Panc1 (cell line): ENCODE measurements at regions of chr4 and their contacts with region 1.

Region 1: GRCh38 chr4:170259631-170260153 is 169.9 kb upstream of the AADAT start:
- DNase-seq: peak; percentile 70
- ATAC-seq: peak; percentile 96
- H3K4me3 ChIP-seq: no peak overlapping the region
- H3K27ac ChIP-seq: no peak overlapping the region
- H3K4me1 ChIP-seq: no peaks in the 10 kb centered on the region
- H3K27me3 ChIP-seq: no peaks in the 10 kb centered on the region
- CTCF ChIP-seq: peak; percentile 86

Region 2: GRCh38 chr4:170138580-170139194 is 121.0 kb before region 1 on chr4:
- CTCF ChIA-PET with region 1: no interaction called
- POLR2A ChIA-PET with region 1: no interaction called
- in situ Hi-C with region 1: no loop called
- intact Hi-C with region 1: loop called (anchors 1 kb)
- DNase-seq: peak; percentile 46
- ATAC-seq: peak; percentile 87
- H3K4me3 ChIP-seq: no peak overlapping the region
- H3K27ac ChIP-seq: no peak overlapping the region
- H3K4me1 ChIP-seq: no peaks in the 10 kb centered on the region
- H3K27me3 ChIP-seq: no peaks in the 10 kb centered on the region
- CTCF ChIP-seq: peak; percentile 77

Region 3: DNA sequence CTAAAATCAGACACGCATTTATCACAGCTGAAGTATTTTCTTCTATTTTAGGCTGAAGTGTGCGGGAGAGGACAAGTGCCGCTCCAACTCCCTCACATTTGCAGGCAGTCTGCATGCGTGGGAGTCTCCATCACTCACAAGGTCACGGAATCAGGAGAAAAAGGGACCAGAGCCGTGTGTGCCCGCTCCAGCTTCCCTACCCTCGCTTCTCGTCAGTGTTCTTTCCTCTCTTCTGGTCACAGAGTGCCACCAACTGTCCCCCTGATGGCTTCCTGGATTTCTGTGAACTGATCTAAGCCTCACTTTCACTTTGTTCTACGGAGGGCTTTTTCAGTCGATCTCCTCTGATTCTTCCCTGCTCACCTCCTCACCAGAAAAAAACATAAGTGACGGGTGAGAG is 237.4 kb after region 1 on chr4:
- CTCF ChIA-PET with region 1: interaction called, 4 read pairs
- POLR2A ChIA-PET with region 1: no interaction called
- in situ Hi-C with region 1: no loop called
- intact Hi-C with region 1: loop called (anchors 5 kb)
- DNase-seq: peak; percentile 0
- ATAC-seq: peak; percentile 79
- H3K4me3 ChIP-seq: peak overlapping the region; percentile 36 to 48
- H3K27ac ChIP-seq: 0 out of 2 replicates have a peak overlapping the region, but pooled peaks have one; percentile 17
- H3K4me1 ChIP-seq: no peaks in the 10 kb centered on the region
- H3K27me3 ChIP-seq: no peaks in the 10 kb centered on the region
- CTCF ChIP-seq: no peak; the same call in 1 of the 2 replicates

Region 4: DNA sequence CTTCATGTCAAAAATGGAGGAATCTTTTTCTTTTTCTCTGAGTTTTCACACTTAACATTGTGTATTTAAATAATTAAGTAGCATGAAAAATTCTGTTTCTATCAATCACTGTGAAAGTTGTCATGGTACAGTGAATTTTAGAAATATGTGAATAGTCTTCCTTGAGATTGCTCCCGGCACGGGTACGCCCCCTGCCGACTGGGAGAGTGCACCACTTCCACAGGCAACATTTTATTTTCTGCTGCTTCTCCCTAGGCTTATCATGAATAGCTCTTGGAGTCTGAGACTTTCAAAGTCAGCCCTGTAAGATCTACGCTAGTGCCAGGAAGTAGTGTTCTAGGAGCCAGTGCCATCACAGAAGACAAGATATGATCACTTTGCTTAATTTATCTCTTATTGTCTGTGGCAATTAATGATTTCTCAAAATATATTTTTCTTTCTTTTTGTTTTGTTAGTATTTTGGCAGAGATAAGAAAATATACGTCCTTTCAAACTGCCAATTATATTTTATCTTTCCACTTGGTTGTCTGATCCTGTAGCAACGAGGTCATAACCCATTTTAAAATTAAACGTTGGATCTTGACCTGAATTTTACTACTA is 593.8 kb after region 1 on chr4:
- CTCF ChIA-PET with region 1: interaction called, 3 read pairs
- POLR2A ChIA-PET with region 1: no interaction called
- in situ Hi-C with region 1: no loop called
- intact Hi-C with region 1: loop called (anchors 5 kb)
- DNase-seq: peak; percentile 4
- ATAC-seq: no peak
- H3K4me3 ChIP-seq: no peak overlapping the region
- H3K27ac ChIP-seq: no peak overlapping the region
- H3K4me1 ChIP-seq: no peaks in the 10 kb centered on the region
- H3K27me3 ChIP-seq: no peaks in the 10 kb centered on the region
- CTCF ChIP-seq: peak; percentile 68